CD4-positive, alpha-beta memory T cell (primary cell): ENCODE measurements at regions of chr10 and their contacts with region 1.

Region 1: GRCh38 chr10:62816331-62817120 is at the start of gene EGR2:
- DNase-seq: peak; percentile 97 to 99 (median 98)
- H3K4me3 ChIP-seq: peak within 1 kb of the TSS; percentile 62 to 66
- H3K4me3 Mint-ChIP-seq: peak within 1 kb of the TSS; percentile 90 to 100 (median 98)
- H3K27ac ChIP-seq: peak within 1 kb of the TSS; percentile 69
- H3K27ac Mint-ChIP-seq: peak within 1 kb of the TSS; percentile 91 to 99 (median 97)
- H3K4me1 ChIP-seq: peaks cover 40% of the 10 kb centered on the region
- H3K4me1 Mint-ChIP-seq: peaks cover 25 to 56% (median 38%) of the 10 kb centered on the region in 4 donors
- H3K27me3 ChIP-seq: peaks cover 25% of the 10 kb centered on the region
- H3K27me3 Mint-ChIP-seq: peaks cover 27 to 34% of the 10 kb centered on the region in 2 donors
- total RNA-seq, gene EGR2: 2.0 to 2.2 TPM

Region 2: GRCh38 chr10:62050893-62051433 is 765.6 kb before region 1 on chr10:
- CTCF ChIA-PET with region 1: no interaction called
- POLR2A ChIA-PET with region 1: interaction called, 6 read pairs
- intact Hi-C with region 1: loop called (anchors 2 kb)
- DNase-seq: peak; percentile 83 to 94 (median 88)
- H3K4me3 ChIP-seq: peak overlapping the region; percentile 69 to 82
- H3K4me3 Mint-ChIP-seq: peak overlapping the region; percentile 89 to 98 (median 91)
- H3K27ac ChIP-seq: peak overlapping the region; percentile 87
- H3K27ac Mint-ChIP-seq: peak overlapping the region; percentile 92 to 100 (median 98)
- H3K4me1 ChIP-seq: peaks cover 78% of the 10 kb centered on the region
- H3K4me1 Mint-ChIP-seq: peaks cover 67 to 98% (median 76%) of the 10 kb centered on the region in 4 donors
- H3K27me3 ChIP-seq: no peaks in the 10 kb centered on the region
- H3K27me3 Mint-ChIP-seq: no peaks in the 10 kb centered on the region

Region 3: GRCh38 chr10:62554632-62555199 is 261.8 kb before region 1 on chr10:
- CTCF ChIA-PET with region 1: interaction called, 4 read pairs
- POLR2A ChIA-PET with region 1: no interaction called
- intact Hi-C with region 1: loop called (anchors 1 kb)
- DNase-seq: peak; percentile 23 to 34 (median 26)
- H3K4me3 ChIP-seq: no peak overlapping the region
- H3K4me3 Mint-ChIP-seq: no peak overlapping the region
- H3K27ac ChIP-seq: no peak overlapping the region
- H3K27ac Mint-ChIP-seq: no peak overlapping the region
- H3K4me1 ChIP-seq: no peaks in the 10 kb centered on the region
- H3K4me1 Mint-ChIP-seq: no peaks in the 10 kb centered on the region
- H3K27me3 ChIP-seq: no peaks in the 10 kb centered on the region
- H3K27me3 Mint-ChIP-seq: peaks cover 15 to 18% of the 10 kb centered on the region in 2 donors

Region 4: GRCh38 chr10:62637249-62638061 is 179.1 kb before region 1 on chr10:
- CTCF ChIA-PET with region 1: interaction called, 166 read pairs
- POLR2A ChIA-PET with region 1: interaction called, 84 read pairs
- intact Hi-C with region 1: loop called (anchors 1 kb)
- DNase-seq: peak; percentile 72 to 83 (median 75)
- H3K4me3 ChIP-seq: peak overlapping the region; percentile 31 to 34
- H3K4me3 Mint-ChIP-seq: no peak overlapping the region
- H3K27ac ChIP-seq: peak overlapping the region; percentile 78
- H3K27ac Mint-ChIP-seq: no peak overlapping the region
- H3K4me1 ChIP-seq: peaks cover 41% of the 10 kb centered on the region
- H3K4me1 Mint-ChIP-seq: peaks cover 6 to 22% (median 16%) of the 10 kb centered on the region in 4 donors
- H3K27me3 ChIP-seq: no peaks in the 10 kb centered on the region
- H3K27me3 Mint-ChIP-seq: no peaks in the 10 kb centered on the region

Region 5: DNA sequence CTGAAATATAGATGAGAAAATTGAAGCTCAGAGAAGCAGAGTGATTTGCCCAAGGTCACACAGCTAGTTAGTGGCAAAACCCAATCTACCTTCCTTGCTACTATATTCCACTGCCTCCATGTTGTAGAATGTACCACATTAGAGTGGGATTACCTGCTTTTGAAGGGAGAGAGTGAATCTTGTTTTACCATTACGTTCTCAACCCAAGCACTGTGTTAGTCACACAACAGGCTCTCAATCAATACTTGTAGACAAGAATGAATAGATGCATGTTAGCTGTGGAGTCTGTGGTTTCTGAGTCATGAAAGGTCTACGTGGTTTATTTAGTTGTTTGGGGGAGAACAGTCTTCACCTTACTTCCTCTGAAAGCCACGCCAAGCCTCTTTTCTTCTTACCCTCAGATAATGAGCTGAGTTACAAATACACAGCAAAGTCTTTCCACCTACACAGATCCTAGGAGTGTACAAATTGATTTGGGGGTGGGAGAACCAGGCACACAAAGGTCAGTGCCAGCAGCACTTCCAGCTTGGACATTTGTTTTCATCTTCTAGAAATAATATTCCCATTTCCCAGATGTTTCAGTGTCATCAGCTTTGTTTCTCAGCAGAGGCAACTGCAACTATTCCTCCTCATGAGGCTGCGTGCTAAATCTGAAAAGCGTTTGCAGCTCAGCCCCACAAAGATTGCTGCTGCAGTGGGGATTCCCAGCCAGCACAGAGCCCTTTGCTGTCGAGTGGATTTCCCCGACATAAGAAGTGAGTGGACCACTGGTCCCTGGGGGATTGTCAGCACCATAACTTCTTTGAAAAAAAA is 83.5 kb before region 1 on chr10:
- CTCF ChIA-PET with region 1: interaction called, 61 read pairs
- POLR2A ChIA-PET with region 1: interaction called, 41 read pairs
- intact Hi-C with region 1: loop called (anchors 1 kb)
- DNase-seq: peak; percentile 76 to 87 (median 81)
- H3K4me3 ChIP-seq: no peak overlapping the region
- H3K4me3 Mint-ChIP-seq: peak overlapping the region in 5 of 8 donors; percentile 26 to 75 (median 42)
- H3K27ac ChIP-seq: peak overlapping the region; percentile 60
- H3K27ac Mint-ChIP-seq: peak overlapping the region in 2 of 7 donors; percentile 65 to 92
- H3K4me1 ChIP-seq: peaks cover 59% of the 10 kb centered on the region
- H3K4me1 Mint-ChIP-seq: peaks cover 5 to 15% (median 13%) of the 10 kb centered on the region in 4 donors
- H3K27me3 ChIP-seq: no peaks in the 10 kb centered on the region
- H3K27me3 Mint-ChIP-seq: peaks cover 0 to under 1% of the 10 kb centered on the region in 2 donors

Region 6: GRCh38 chr10:63133056-63133820 is 316.7 kb after region 1 on chr10 and contains the start of gene NRBF2:
- CTCF ChIA-PET with region 1: interaction called, 18 read pairs
- POLR2A ChIA-PET with region 1: interaction called, 17 read pairs
- intact Hi-C with region 1: loop called (anchors 1 kb)
- DNase-seq: peak; percentile 97 to 98 (median 98)
- H3K4me3 ChIP-seq: peak within 1 kb of the TSS; percentile 81 to 88
- H3K4me3 Mint-ChIP-seq: peak within 1 kb of the TSS; percentile 92 to 95 (median 92)
- H3K27ac ChIP-seq: peak within 1 kb of the TSS; percentile 96
- H3K27ac Mint-ChIP-seq: peak within 1 kb of the TSS; percentile 92 to 98 (median 97)
- H3K4me1 ChIP-seq: peaks cover 46% of the 10 kb centered on the region
- H3K4me1 Mint-ChIP-seq: peaks cover 24 to 45% (median 35%) of the 10 kb centered on the region in 4 donors
- H3K27me3 ChIP-seq: no peaks in the 10 kb centered on the region
- H3K27me3 Mint-ChIP-seq: peaks cover 0 to 7% of the 10 kb centered on the region in 2 donors
- total RNA-seq, gene NRBF2: 17.8 to 18.2 TPM